ENCODE measurements at regions of chr13 and their contacts with region 1.

Region 1: GRCh38 chr13:94362411-94362909 is 117.0 kb downstream of the DCT start:
- DNase-seq: peak; percentile 36
- ATAC-seq: peak; percentile 100
- H3K4me3 ChIP-seq: no peak overlapping the region
- H3K27ac ChIP-seq: no peak overlapping the region
- H3K4me1 ChIP-seq: no peaks in the 10 kb centered on the region
- H3K27me3 ChIP-seq: 0 out of 4 replicates have a peak, but pooled peaks cover 0 to 3% of the 10 kb centered on the region in 2 experiments
- CTCF ChIP-seq: peak; percentile 69 to 84 (median 82)
- EP300 ChIP-seq: no peak
- POLR2A ChIP-seq: no peak
- RAD21 ChIP-seq: peak; percentile 96

Region 2: GRCh38 chr13:92573467-92574057 is 1788.9 kb before region 1 on chr13:
- CTCF ChIA-PET with region 1: interaction called, 8 read pairs
- POLR2A ChIA-PET with region 1: no interaction called
- RAD21 ChIA-PET with region 1: interaction called, 5 read pairs
- SMC1A ChIA-PET with region 1: interaction called, 7 read pairs
- in situ Hi-C with region 1: loop called (anchors 25 kb)
- intact Hi-C with region 1: loop called (anchors 1 kb)
- DNase-seq: no peak
- ATAC-seq: peak; percentile 90
- H3K4me3 ChIP-seq: no peak overlapping the region
- H3K27ac ChIP-seq: no peak overlapping the region
- H3K4me1 ChIP-seq: no peaks in the 10 kb centered on the region
- H3K27me3 ChIP-seq: no peaks in the 10 kb centered on the region
- CTCF ChIP-seq: peak in 2 of 3 experiments; percentile 17 to 39; a peak in 3 of 6 replicates
- EP300 ChIP-seq: no peak
- POLR2A ChIP-seq: no peak
- RAD21 ChIP-seq: peak; percentile 41; the same call in 1 of the 2 replicates

Region 3: GRCh38 chr13:93169980-93170379 is 1192.5 kb before region 1 on chr13:
- CTCF ChIA-PET with region 1: interaction called, 3 read pairs
- POLR2A ChIA-PET with region 1: no interaction called
- RAD21 ChIA-PET with region 1: no interaction called
- SMC1A ChIA-PET with region 1: no interaction called
- in situ Hi-C with region 1: no loop called
- intact Hi-C with region 1: loop called (anchors 10 kb)
- DNase-seq: no peak
- ATAC-seq: no peak
- H3K4me3 ChIP-seq: no peak overlapping the region
- H3K27ac ChIP-seq: no peak overlapping the region
- H3K4me1 ChIP-seq: no peaks in the 10 kb centered on the region
- H3K27me3 ChIP-seq: no peaks in the 10 kb centered on the region
- CTCF ChIP-seq: no peak
- EP300 ChIP-seq: no peak
- POLR2A ChIP-seq: no peak
- RAD21 ChIP-seq: no peak

Region 4: DNA sequence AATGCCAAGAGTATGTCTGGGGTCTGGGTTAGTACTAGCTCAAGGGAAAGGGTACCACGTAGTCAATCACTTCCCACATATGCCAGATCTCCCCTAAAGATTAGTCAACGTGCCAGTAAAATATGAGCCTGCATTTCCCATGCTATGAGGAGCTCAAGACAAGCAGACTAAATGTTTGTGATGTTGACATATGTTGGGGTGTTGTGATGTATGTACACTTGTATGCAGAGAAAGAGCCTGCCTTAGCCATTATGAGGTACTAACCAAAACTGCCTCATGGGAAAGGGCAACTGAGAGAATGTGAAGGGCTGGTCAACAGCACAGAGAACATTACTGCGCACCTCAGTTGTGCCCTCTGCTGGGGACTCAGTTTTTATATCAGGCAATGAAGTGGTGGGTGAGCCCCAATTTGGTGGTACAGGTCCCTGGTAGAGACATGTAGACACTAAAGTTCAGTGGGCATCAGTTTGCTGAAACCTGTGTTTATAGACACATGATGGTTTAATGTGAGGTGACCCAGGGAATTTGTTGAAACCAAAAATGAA is 170.0 kb before region 1 on chr13:
- CTCF ChIA-PET with region 1: interaction called, 3 read pairs
- POLR2A ChIA-PET with region 1: no interaction called
- RAD21 ChIA-PET with region 1: no interaction called
- SMC1A ChIA-PET with region 1: no interaction called
- in situ Hi-C with region 1: no loop called
- intact Hi-C with region 1: loop called (anchors 5 kb)
- DNase-seq: no peak
- ATAC-seq: peak; percentile 78
- H3K4me3 ChIP-seq: no peak overlapping the region
- H3K27ac ChIP-seq: no peak overlapping the region
- H3K4me1 ChIP-seq: no peaks in the 10 kb centered on the region
- H3K27me3 ChIP-seq: no peaks in the 10 kb centered on the region
- CTCF ChIP-seq: peak; percentile 24 to 43 (median 32); a peak in 3 of 6 replicates
- EP300 ChIP-seq: no peak
- POLR2A ChIP-seq: no peak
- RAD21 ChIP-seq: peak; percentile 31; the same call in 1 of the 2 replicates

Region 5: GRCh38 chr13:94272038-94272437 is 90.4 kb before region 1 on chr13:
- CTCF ChIA-PET with region 1: interaction called, 3 read pairs
- POLR2A ChIA-PET with region 1: no interaction called
- RAD21 ChIA-PET with region 1: interaction called, 3 read pairs
- SMC1A ChIA-PET with region 1: interaction called, 4 read pairs
- in situ Hi-C with region 1: no loop called
- intact Hi-C with region 1: loop called (anchors 5 kb)
- DNase-seq: no peak
- ATAC-seq: no peak
- H3K4me3 ChIP-seq: no peak overlapping the region
- H3K27ac ChIP-seq: no peak overlapping the region
- H3K4me1 ChIP-seq: no peaks in the 10 kb centered on the region
- H3K27me3 ChIP-seq: no peaks in the 10 kb centered on the region
- CTCF ChIP-seq: no peak
- EP300 ChIP-seq: no peak
- POLR2A ChIP-seq: no peak
- RAD21 ChIP-seq: no peak

Region 6: DNA sequence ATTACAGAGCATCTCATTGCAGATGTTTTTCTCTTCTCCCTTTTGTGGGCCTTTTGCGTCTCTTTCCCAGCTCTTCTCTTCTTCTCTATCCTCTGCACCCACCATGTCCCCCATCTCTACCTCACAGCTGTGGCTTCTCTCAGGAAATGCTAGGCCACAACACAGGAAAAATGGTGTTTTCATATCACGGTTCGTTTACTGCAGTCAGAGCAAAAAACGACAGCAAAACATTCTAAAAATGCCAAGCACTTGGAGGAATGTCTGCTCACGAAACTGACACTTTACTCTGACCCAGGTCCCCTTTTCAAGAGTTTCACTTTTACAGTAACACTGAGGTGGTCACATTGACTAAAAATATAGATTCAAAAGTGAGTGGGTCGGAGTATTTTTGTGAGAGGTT is 35.1 kb before region 1 on chr13:
- CTCF ChIA-PET with region 1: no interaction called
- POLR2A ChIA-PET with region 1: no interaction called
- RAD21 ChIA-PET with region 1: no interaction called
- SMC1A ChIA-PET with region 1: no interaction called
- in situ Hi-C with region 1: no loop called
- intact Hi-C with region 1: no loop called
- DNase-seq: peak; percentile 73
- ATAC-seq: peak; percentile 89
- H3K4me3 ChIP-seq: no peak overlapping the region
- H3K27ac ChIP-seq: no peak overlapping the region
- H3K4me1 ChIP-seq: peaks cover 16% of the 10 kb centered on the region
- H3K27me3 ChIP-seq: no peaks in the 10 kb centered on the region
- CTCF ChIP-seq: no peak
- EP300 ChIP-seq: no peak
- POLR2A ChIP-seq: no peak
- RAD21 ChIP-seq: 0 out of 2 replicates have a peak, but pooled peaks have one; percentile 16